MCF 10A (cell line): ENCODE measurements at regions of chr19 and their contacts with region 1.

Region 1: DNA sequence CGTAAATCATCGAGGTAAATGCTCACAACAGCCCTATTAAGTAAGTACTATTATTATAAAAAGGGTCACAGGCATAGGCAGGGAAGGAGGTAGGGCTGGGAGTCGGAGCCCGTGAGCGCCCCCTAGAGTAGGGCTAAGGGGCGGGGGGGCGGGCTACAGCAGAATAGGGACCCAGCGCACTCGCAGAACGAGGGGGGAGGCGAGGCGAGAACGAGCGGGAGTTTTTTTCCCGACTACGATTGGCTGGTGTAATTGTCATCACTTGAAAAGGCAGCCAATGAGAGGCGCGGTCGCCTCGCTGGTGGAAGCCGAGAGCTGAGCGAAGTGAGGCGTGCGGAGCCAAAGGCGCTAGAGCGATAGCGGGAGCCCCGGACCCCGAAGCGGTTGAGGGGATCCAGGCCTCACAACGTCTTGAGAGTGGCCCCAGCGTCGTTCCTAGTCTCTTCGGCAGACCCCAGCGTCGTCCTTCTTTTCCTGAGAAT is 24.2 kb downstream of the KEAP1 start:
- DNase-seq: peak; percentile 17
- H3K4me3 Mint-ChIP-seq: no peak overlapping the region
- H3K27ac Mint-ChIP-seq: no peak overlapping the region
- H3K4me1 Mint-ChIP-seq: peaks cover 6% of the 10 kb centered on the region
- H3K27me3 Mint-ChIP-seq: no peaks in the 10 kb centered on the region
- CTCF ChIP-seq: peak; percentile 30

Region 2: GRCh38 chr19:10315335-10316214 is 163.4 kb before region 1 on chr19 and contains the start of gene FDX2:
- CTCF ChIA-PET with region 1: no interaction called
- POLR2A ChIA-PET with region 1: no interaction called
- intact Hi-C with region 1: no loop called
- DNase-seq: peak; percentile 84
- H3K4me3 Mint-ChIP-seq: peak within 1 kb of the TSS; percentile 93
- H3K27ac Mint-ChIP-seq: peak within 1 kb of the TSS; percentile 90
- H3K4me1 Mint-ChIP-seq: peaks cover 18% of the 10 kb centered on the region
- H3K27me3 Mint-ChIP-seq: no peaks in the 10 kb centered on the region
- CTCF ChIP-seq: no peak
- total RNA-seq, gene FDX2: 30.2 and 30.3 TPM in 2 replicates

Region 3: GRCh38 chr19:10543420-10544241 is 64.7 kb after region 1 on chr19 and contains the start of gene ATG4D:
- CTCF ChIA-PET with region 1: interaction called, 4 read pairs
- POLR2A ChIA-PET with region 1: no interaction called
- intact Hi-C with region 1: loop called (anchors 5 kb)
- DNase-seq: peak; percentile 83
- H3K4me3 Mint-ChIP-seq: peak within 1 kb of the TSS; percentile 80
- H3K27ac Mint-ChIP-seq: peak within 1 kb of the TSS; percentile 87
- H3K4me1 Mint-ChIP-seq: peaks cover 6% of the 10 kb centered on the region
- H3K27me3 Mint-ChIP-seq: peaks cover 11% of the 10 kb centered on the region
- CTCF ChIP-seq: no peak
- total RNA-seq, gene ATG4D: 22.6 and 36.8 TPM in 2 replicates

Region 4: GRCh38 chr19:10551698-10552301 is 72.9 kb after region 1 on chr19:
- CTCF ChIA-PET with region 1: interaction called, 10 read pairs
- POLR2A ChIA-PET with region 1: interaction called, 4 read pairs
- intact Hi-C with region 1: no loop called
- DNase-seq: peak; percentile 72
- H3K4me3 Mint-ChIP-seq: no peak overlapping the region
- H3K27ac Mint-ChIP-seq: no peak overlapping the region
- H3K4me1 Mint-ChIP-seq: no peaks in the 10 kb centered on the region
- H3K27me3 Mint-ChIP-seq: no peaks in the 10 kb centered on the region
- CTCF ChIP-seq: peak; percentile 27

Region 5: GRCh38 chr19:10565567-10566407 is 86.8 kb after region 1 on chr19 and contains the start of gene KRI1:
- CTCF ChIA-PET with region 1: interaction called, 11 read pairs
- POLR2A ChIA-PET with region 1: no interaction called
- intact Hi-C with region 1: no loop called
- DNase-seq: peak; percentile 98
- H3K4me3 Mint-ChIP-seq: peak within 1 kb of the TSS; percentile 96
- H3K27ac Mint-ChIP-seq: peak within 1 kb of the TSS; percentile 94
- H3K4me1 Mint-ChIP-seq: peaks cover 31% of the 10 kb centered on the region
- H3K27me3 Mint-ChIP-seq: no peaks in the 10 kb centered on the region
- CTCF ChIP-seq: no peak
- total RNA-seq, gene KRI1: 23.3 and 27.4 TPM in 2 replicates

Region 6: GRCh38 chr19:10644260-10645007 is 165.5 kb after region 1 on chr19:
- CTCF ChIA-PET with region 1: interaction called, 13 read pairs
- POLR2A ChIA-PET with region 1: no interaction called
- intact Hi-C with region 1: no loop called
- DNase-seq: peak; percentile 75
- H3K4me3 Mint-ChIP-seq: no peak overlapping the region
- H3K27ac Mint-ChIP-seq: no peak overlapping the region
- H3K4me1 Mint-ChIP-seq: no peaks in the 10 kb centered on the region
- H3K27me3 Mint-ChIP-seq: no peaks in the 10 kb centered on the region
- CTCF ChIP-seq: peak; percentile 87

Region 7: GRCh38 chr19:10695401-10696398 is 216.8 kb after region 1 on chr19:
- CTCF ChIA-PET with region 1: interaction called, 5 read pairs
- POLR2A ChIA-PET with region 1: no interaction called
- intact Hi-C with region 1: loop called (anchors 10 kb)
- DNase-seq: peak; percentile 95
- H3K4me3 Mint-ChIP-seq: peak overlapping the region; percentile 66
- H3K27ac Mint-ChIP-seq: no peak overlapping the region
- H3K4me1 Mint-ChIP-seq: peaks cover 11% of the 10 kb centered on the region
- H3K27me3 Mint-ChIP-seq: no peaks in the 10 kb centered on the region
- CTCF ChIP-seq: no peak